Right cardiac atrium (tissue), 5 donors: ENCODE measurements at regions of chr14 and their contacts with region 1.

Region 1: DNA sequence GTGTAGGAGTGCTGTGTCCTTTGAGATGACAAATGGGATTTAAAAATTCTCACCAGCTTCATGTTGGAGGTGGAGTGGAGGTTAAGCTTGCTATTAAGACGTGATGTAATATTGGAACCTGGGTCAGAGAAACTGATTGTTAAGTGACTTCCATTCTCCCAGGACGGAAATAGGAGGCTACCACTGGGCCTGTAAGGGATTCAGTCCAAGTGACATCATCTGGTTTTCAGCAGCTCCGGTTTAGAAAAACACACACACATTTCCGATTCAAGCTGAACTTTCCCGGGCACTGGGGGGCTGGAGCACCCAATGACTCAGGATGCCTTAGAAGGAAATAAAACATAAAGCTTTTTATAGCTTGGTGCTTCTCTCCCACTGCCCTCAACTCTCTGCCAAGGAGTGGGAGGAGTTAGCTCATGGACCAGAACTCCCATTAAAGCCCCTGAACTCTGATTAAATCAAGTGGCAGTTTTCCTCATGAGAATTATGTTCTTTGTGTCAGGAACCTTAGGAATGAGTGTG is 12.4 kb downstream of the CALM1 start:
- DNase-seq: peak; percentile 75 to 83 (median 78)
- ATAC-seq: peak; percentile 90 to 93
- H3K4me3 ChIP-seq: no peak overlapping the region
- H3K27ac ChIP-seq: peak overlapping the region; percentile 78
- H3K4me1 ChIP-seq: peaks cover 4% of the 10 kb centered on the region
- H3K27me3 ChIP-seq: no peaks in the 10 kb centered on the region

Region 2: DNA sequence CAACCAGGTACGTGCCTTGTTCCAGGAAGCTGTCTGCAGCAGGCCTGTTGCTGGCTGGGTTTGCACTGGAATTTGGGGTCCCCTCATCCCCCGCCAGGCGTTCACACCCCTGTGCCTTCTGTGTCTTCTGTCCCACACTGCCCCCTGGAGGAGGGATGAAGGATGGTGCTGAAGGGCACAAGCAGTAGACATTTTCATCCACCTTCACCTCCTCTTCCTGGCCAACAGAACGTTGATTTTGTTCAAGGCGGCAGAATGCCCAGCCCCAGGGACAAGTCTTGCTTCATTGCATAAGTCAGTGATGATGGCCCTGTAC is 109.6 kb after region 1 on chr14:
- intact Hi-C with region 1: loop called in 2 of 4 experiments (anchors 5 to 10 kb)
- DNase-seq: peak in 1 of 3 donors; percentile 58
- ATAC-seq: no peak
- H3K4me3 ChIP-seq: no peak overlapping the region
- H3K27ac ChIP-seq: no peak overlapping the region
- H3K4me1 ChIP-seq: peaks cover 27% of the 10 kb centered on the region
- H3K27me3 ChIP-seq: no peaks in the 10 kb centered on the region